ENCODE measurements at regions of chr4 and their contacts with region 1.

Region 1: DNA sequence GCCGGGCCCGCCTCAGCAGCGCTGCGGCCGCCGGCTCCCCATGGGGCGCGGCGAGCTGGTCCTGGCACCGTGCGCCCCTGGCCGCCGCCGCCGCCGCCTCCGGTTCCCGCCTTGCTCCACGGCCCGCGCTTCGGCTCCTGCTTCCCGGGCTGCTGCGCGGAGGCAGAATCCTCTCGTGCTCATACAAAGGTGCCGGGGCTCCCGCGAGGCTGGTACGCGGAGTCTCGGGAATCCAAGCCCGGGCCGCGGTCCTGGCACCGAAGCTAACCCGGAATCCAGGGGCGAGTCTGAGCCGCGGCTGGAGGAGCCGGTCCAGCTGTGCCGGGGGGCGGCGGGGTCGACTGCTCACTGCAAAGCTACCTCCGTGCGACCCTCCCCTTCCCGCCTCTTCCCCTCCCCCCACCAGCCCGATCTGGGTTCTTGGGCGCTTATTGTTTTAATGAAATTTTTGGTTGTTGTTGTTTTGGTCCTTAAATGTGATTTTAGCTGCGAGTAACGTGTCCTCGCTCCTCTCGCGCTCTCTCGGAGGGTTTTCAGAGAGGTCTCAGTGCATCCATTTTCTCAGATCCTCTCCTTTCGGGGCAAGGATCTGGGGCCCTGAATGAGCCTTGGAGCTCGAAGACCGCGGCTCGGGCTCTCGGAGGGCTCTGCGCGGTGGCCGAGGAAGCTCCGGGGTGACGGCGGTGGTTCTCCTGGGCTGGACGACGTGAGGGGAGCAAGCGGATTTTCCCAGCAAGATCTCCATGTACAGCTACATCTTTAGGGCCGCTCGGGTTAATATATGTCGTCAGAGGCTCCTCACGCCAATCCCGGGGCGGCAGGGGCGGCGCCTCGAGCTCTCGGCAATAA is at the start of gene HAND2:
- DNase-seq: peak; percentile 64
- H3K4me3 ChIP-seq: peak within 1 kb of the TSS; percentile 40 to 83 (median 55)
- H3K27ac ChIP-seq: peak within 1 kb of the TSS; percentile 81 to 95 (median 89)
- H3K4me1 ChIP-seq: peaks cover 0 to 19% (median 5%) of the 10 kb centered on the region in 4 donors
- H3K27me3 ChIP-seq: peaks cover 99% of the 10 kb centered on the region
- CTCF ChIP-seq: no peak
- EP300 ChIP-seq: no peak
- POLR2A ChIP-seq: peak; percentile 59
- total RNA-seq, gene HAND2: 24.6 to 87.6 (median 40.9) TPM

Region 2: GRCh38 chr4:173924561-173924960 is 394.9 kb after region 1 on chr4:
- in situ Hi-C with region 1: no loop called
- intact Hi-C with region 1: loop called (anchors 10 kb)
- DNase-seq: no peak
- H3K4me3 ChIP-seq: no peak overlapping the region
- H3K27ac ChIP-seq: peak overlapping the region in 3 of 4 donors; percentile 31 to 64 (median 58)
- H3K4me1 ChIP-seq: peaks cover 0 to 10% (median 5%) of the 10 kb centered on the region in 4 donors
- H3K27me3 ChIP-seq: no peaks in the 10 kb centered on the region
- CTCF ChIP-seq: no peak
- EP300 ChIP-seq: no peak
- POLR2A ChIP-seq: no peak

Measured in transverse colon (tissue), 4 donors.